ENCODE measurements at regions of chr11 and their contacts with region 1.

Region 1: GRCh38 chr11:66835768-66836405 is 7.4 kb upstream of the RCE1 start:
- DNase-seq: no peak
- ATAC-seq: no peak
- H3K4me3 ChIP-seq: no peak overlapping the region
- H3K27ac ChIP-seq: no peak overlapping the region
- H3K4me1 ChIP-seq: no peaks in the 10 kb centered on the region
- H3K27me3 ChIP-seq: no peaks in the 10 kb centered on the region

Region 2: GRCh38 chr11:66568124-66568916 is 267.6 kb before region 1 on chr11 and contains the start of gene CTSF:
- intact Hi-C with region 1: loop called (anchors 10 kb)
- DNase-seq: peak; percentile 93 to 96
- ATAC-seq: peak; percentile 93
- H3K4me3 ChIP-seq: peak within 1 kb of the TSS; percentile 45 to 69
- H3K27ac ChIP-seq: no peak within 1 kb of the TSS
- H3K4me1 ChIP-seq: no peaks in the 10 kb centered on the region
- H3K27me3 ChIP-seq: no peaks in the 10 kb centered on the region
- total RNA-seq, gene CTSF: 38.3 to 110 TPM

Region 3: DNA sequence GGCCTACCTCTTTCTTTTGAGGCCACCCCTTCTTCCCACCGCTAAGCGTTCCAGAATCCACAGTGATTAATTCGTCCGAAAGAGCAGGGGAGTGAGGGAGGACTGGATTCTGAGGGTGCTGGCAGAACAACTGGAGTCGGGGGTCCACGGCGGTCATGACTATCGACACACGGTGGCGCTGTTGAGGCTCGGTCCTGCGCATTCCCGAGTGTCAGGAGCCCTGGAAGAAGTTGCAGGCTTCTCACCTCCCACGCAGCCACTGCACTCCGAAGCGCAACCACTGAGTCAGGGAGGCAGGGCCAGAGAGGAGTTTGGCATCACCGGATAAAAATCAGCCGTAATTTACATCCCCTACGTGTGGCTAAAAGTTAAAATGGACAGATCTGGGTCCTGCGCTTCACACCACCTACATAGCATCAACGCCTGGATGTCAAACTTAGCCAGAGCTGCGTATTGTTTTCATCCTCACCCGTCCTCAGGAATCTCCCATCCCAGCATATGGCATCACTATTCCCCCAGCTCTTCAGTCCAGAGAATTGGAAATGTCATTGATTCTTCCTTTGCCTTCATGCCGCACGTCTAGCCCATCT is 256.8 kb before region 1 on chr11:
- intact Hi-C with region 1: loop called in 1 of 2 experiments (anchors 10 kb)
- DNase-seq: peak; percentile 87 to 96
- ATAC-seq: peak; percentile 87
- H3K4me3 ChIP-seq: no peak overlapping the region
- H3K27ac ChIP-seq: no peak overlapping the region
- H3K4me1 ChIP-seq: no peaks in the 10 kb centered on the region
- H3K27me3 ChIP-seq: no peaks in the 10 kb centered on the region

Region 4: GRCh38 chr11:66659763-66660162 is 176.1 kb before region 1 on chr11:
- intact Hi-C with region 1: no loop called
- DNase-seq: no peak
- ATAC-seq: no peak
- H3K4me3 ChIP-seq: no peak overlapping the region
- H3K27ac ChIP-seq: no peak overlapping the region
- H3K4me1 ChIP-seq: no peaks in the 10 kb centered on the region
- H3K27me3 ChIP-seq: no peaks in the 10 kb centered on the region

Region 5: DNA sequence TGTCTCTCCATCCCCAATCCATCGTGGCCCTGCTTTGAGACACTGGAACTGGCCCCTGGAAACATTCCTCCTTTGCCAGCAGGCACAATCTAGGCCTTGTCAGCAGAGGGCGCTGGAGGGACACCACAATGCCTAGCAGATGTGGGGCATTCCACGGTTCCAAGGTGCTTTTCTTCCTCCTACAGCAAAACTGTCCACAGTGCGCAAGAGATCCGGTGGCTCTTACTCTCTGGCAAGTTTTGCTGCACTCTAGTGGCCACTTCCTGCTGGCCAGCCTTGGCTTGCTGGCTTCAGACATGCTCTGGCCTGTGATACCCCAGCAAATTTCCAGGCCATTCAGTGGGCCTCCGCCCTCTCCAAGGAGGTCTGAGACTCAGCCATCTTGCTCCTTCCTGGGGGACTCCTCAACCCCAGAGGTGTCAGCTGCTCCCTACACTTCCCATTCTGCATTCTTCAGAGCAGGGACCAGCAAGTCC is 141.1 kb before region 1 on chr11:
- intact Hi-C with region 1: loop called (anchors 1 to 2 kb)
- DNase-seq: peak; percentile 93 to 94
- ATAC-seq: peak; percentile 87
- H3K4me3 ChIP-seq: no peak overlapping the region
- H3K27ac ChIP-seq: no peak overlapping the region
- H3K4me1 ChIP-seq: no peaks in the 10 kb centered on the region
- H3K27me3 ChIP-seq: no peaks in the 10 kb centered on the region

Region 6: DNA sequence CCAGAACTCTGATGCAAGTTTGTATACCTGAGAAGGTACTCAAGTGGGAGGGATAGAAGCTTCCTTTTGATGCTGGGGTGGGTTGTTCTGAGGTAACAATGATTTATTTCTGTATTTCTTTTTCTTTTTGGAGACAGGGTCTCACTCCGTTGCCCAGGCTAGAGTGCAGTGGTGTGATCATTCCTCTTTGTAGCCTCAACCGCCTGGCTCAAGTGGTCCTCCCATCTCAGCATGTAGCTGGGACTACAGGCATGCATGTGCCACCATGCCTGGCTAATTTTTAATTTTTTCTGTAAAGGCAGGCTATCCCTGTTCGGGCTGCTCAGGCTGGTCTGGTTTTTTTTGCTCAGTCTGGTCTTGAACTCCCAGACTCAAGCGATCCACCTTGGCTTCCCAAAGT is 291.1 kb after region 1 on chr11:
- intact Hi-C with region 1: no loop called
- DNase-seq: no peak
- ATAC-seq: no peak
- H3K4me3 ChIP-seq: no peak overlapping the region
- H3K27ac ChIP-seq: no peak overlapping the region
- H3K4me1 ChIP-seq: no peaks in the 10 kb centered on the region
- H3K27me3 ChIP-seq: no peaks in the 10 kb centered on the region

Measured in aorta (tissue), 5 donors.